Lower leg skin (tissue), 4 donors: ENCODE measurements at regions of chr6 and their contacts with region 1.

Region 1: GRCh38 chr6:122657601-122658000 is 47.4 kb downstream of the PKIB start:
- DNase-seq: no peak
- H3K4me3 ChIP-seq: no peak overlapping the region
- CTCF ChIP-seq: no peak
- POLR2A ChIP-seq: no peak

Region 2: DNA sequence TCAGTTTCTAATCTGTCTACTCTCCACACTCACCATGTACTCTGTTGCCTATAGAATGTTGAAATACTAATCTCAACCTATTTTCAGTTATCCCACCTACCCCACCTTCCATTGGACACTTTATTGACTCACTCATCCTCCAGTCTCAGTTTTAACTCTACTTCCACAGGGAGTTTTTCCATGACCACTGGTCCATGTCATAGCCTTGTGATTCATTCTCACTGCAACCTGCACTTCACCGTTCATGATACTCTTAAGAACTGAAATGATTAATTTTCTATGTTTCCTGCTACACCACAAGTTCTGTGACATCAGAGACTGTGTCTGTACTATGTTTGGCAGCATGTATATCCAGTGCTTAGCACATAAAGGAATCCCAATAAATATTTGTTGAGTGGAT is 381.0 kb before region 1 on chr6:
- intact Hi-C with region 1: no loop called
- DNase-seq: no peak
- H3K4me3 ChIP-seq: no peak overlapping the region
- CTCF ChIP-seq: no peak
- POLR2A ChIP-seq: no peak

Region 3: GRCh38 chr6:122701666-122702065 is 44.1 kb after region 1 on chr6:
- intact Hi-C with region 1: loop called (anchors 1 kb)
- DNase-seq: no peak
- H3K4me3 ChIP-seq: no peak overlapping the region
- CTCF ChIP-seq: no peak
- POLR2A ChIP-seq: no peak